CD14-positive monocyte (primary cell): ENCODE measurements at regions of chr11 and their contacts with region 1.

Region 1: GRCh38 chr11:86938900-86939880 is 16.0 kb downstream of the FZD4 start:
- DNase-seq: peak in 2 of 3 donors; percentile 20 to 29
- H3K4me3 ChIP-seq: no peak overlapping the region
- H3K4me3 Mint-ChIP-seq: no peak overlapping the region
- H3K27ac ChIP-seq: no peak overlapping the region
- H3K27ac Mint-ChIP-seq: no peak overlapping the region
- H3K4me1 ChIP-seq: no peaks in the 10 kb centered on the region
- H3K4me1 Mint-ChIP-seq: peaks cover 5% of the 10 kb centered on the region
- H3K27me3 ChIP-seq: no peaks in the 10 kb centered on the region
- H3K27me3 Mint-ChIP-seq: peaks cover 0 to 2% (median 1%) of the 10 kb centered on the region in 3 donors
- CTCF ChIP-seq: peak; percentile 78

Region 2: DNA sequence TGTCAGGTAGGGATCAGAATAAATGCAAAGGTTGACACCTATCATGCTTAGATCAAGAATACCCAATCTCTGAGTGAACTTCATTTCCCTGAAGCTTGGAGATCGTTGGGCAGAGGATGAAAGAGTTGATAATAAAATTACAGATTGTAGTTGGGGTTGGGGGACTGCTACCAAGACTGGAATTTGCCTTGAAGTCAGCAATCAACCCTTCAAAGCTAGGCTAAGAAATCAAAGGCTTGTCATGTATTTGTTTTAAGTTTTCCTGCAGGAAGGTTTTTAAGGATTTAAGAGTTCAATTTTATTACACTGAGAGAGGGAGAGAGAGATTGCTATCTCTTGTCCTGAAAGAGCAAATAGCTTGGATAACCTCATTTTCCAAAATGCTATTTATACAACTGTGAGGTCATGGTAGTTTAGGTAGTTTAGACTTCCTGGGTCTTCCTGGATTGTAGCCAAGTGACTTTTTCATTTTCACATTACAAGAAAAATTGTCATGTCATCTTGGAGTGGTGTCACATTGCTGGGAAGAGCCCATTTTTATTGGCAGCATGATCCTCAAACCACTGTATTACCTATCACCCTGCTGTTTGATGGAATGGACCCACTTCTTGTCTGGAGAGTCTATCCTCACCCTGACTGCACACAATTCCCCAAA is 149.0 kb before region 1 on chr11:
- intact Hi-C with region 1: no loop called
- DNase-seq: no peak
- H3K4me3 ChIP-seq: no peak overlapping the region
- H3K4me3 Mint-ChIP-seq: no peak overlapping the region
- H3K27ac ChIP-seq: no peak overlapping the region
- H3K27ac Mint-ChIP-seq: no peak overlapping the region
- H3K4me1 ChIP-seq: no peaks in the 10 kb centered on the region
- H3K4me1 Mint-ChIP-seq: no peaks in the 10 kb centered on the region
- H3K27me3 ChIP-seq: peaks cover 0 to under 1% of the 10 kb centered on the region in 2 donors
- H3K27me3 Mint-ChIP-seq: no peaks in the 10 kb centered on the region
- CTCF ChIP-seq: no peak

Region 3: GRCh38 chr11:87290304-87290922 is 351.2 kb after region 1 on chr11:
- intact Hi-C with region 1: loop called (anchors 5 kb)
- DNase-seq: peak; percentile 2 to 33 (median 18)
- H3K4me3 ChIP-seq: no peak overlapping the region
- H3K4me3 Mint-ChIP-seq: no peak overlapping the region
- H3K27ac ChIP-seq: no peak overlapping the region
- H3K27ac Mint-ChIP-seq: no peak overlapping the region
- H3K4me1 ChIP-seq: no peaks in the 10 kb centered on the region
- H3K4me1 Mint-ChIP-seq: no peaks in the 10 kb centered on the region
- H3K27me3 ChIP-seq: no peaks in the 10 kb centered on the region
- H3K27me3 Mint-ChIP-seq: no peaks in the 10 kb centered on the region
- CTCF ChIP-seq: peak; percentile 79

Region 4: DNA sequence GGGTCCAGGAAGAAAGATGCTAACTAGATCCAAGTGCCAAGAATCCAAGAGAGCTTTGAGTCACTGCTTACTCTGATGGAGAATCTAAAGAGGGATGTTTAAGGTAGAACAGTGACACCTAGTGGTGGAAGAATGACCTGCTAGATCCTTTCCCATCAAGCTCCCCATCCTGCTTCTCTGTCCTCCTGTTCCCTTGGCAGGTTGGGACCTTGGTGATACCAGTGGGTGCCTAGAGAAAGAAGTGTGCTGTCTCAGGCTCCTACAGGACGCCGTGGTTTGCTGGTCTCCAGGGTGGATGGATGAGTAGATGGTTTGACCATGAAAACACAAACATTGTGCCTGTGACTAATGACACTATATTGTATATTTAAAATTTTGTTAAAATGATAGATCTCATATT is 482.2 kb after region 1 on chr11:
- intact Hi-C with region 1: loop called in 1 of 2 experiments (anchors 5 kb)
- DNase-seq: peak; percentile 24 to 55 (median 50)
- H3K4me3 ChIP-seq: no peak overlapping the region
- H3K4me3 Mint-ChIP-seq: no peak overlapping the region
- H3K27ac ChIP-seq: no peak overlapping the region
- H3K27ac Mint-ChIP-seq: no peak overlapping the region
- H3K4me1 ChIP-seq: no peaks in the 10 kb centered on the region
- H3K4me1 Mint-ChIP-seq: no peaks in the 10 kb centered on the region
- H3K27me3 ChIP-seq: no peaks in the 10 kb centered on the region
- H3K27me3 Mint-ChIP-seq: peaks cover 0 to 1% (median 0%) of the 10 kb centered on the region in 3 donors
- CTCF ChIP-seq: peak; percentile 81